ENCODE measurements at regions of chr2 and their contacts with region 1.

Region 1: DNA sequence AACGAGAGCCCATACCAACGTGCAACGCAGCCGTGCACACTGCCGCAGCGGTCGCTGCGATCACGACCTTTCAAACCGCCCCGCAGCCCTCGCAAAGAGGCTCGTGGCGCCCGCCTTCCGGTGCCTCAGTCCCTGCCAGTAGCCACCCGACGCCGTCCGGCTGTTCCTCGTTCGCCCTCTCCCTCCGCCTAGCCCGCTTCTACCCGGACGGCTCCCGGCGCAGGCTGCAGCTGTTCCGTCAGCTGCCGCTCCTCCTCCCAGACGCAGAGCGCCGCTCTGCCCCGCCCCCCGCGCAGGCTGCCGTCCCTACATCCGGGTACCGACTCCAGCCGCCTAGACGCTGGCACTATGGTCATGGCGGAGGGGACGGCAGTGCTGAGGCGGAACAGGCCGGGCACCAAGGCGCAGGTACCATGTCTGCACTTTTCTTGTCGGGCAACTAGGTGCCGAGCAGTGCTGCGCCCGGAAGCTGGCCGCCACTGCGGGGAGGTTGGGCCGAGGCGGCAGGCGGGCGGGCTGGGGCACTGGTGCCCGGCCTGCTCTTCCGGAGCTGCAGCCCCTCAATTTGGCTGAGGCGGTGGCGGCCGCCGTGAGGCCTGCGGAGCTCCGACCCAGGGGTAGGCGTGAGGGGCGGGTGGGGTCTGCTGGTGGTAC is at the start of gene MOB4:
- DNase-seq: peak; percentile 93
- ATAC-seq: peak; percentile 96
- H3K4me3 ChIP-seq: peak within 1 kb of the TSS; percentile 89 to 98 (median 91)
- H3K27ac ChIP-seq: peak within 1 kb of the TSS; percentile 77
- H3K4me1 ChIP-seq: peaks cover 45% of the 10 kb centered on the region
- H3K27me3 ChIP-seq: no peaks in the 10 kb centered on the region; a peak in 1 of 5 replicates
- CTCF ChIP-seq: peak; percentile 53
- EP300 ChIP-seq: peak; percentile 88 to 100
- POLR2A ChIP-seq: peak; percentile 96 to 97
- RAD21 ChIP-seq: peak; percentile 81
- total RNA-seq, gene MOB4: 38.6 and 68.3 TPM in 2 replicates

Region 2: DNA sequence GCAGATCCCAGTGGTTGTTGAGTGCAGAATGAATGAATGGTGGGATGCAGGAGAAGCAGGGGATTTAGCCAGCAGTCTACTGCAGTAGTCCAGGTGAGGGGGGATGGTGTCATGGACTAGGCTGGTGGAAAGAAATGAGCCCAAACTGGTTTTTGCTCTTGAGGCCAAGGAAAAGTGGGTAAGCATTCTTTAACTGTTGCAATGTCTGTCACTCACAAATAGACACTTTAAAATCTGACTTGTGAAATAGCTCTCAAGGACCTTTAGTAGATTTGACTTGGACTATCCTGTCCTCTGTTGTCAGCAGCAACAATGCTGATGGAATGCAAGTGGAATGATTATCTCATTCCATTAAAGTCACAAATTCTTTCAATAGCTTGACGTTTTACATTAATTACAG is 1307.0 kb before region 1 on chr2:
- CTCF ChIA-PET with region 1: no interaction called
- POLR2A ChIA-PET with region 1: no interaction called
- in situ Hi-C with region 1: no loop called
- intact Hi-C with region 1: no loop called
- DNase-seq: no peak
- ATAC-seq: no peak
- H3K4me3 ChIP-seq: no peak overlapping the region
- H3K27ac ChIP-seq: no peak overlapping the region
- H3K4me1 ChIP-seq: no peaks in the 10 kb centered on the region
- H3K27me3 ChIP-seq: no peaks in the 10 kb centered on the region
- CTCF ChIP-seq: no peak
- EP300 ChIP-seq: no peak
- POLR2A ChIP-seq: no peak
- RAD21 ChIP-seq: no peak

Region 3: DNA sequence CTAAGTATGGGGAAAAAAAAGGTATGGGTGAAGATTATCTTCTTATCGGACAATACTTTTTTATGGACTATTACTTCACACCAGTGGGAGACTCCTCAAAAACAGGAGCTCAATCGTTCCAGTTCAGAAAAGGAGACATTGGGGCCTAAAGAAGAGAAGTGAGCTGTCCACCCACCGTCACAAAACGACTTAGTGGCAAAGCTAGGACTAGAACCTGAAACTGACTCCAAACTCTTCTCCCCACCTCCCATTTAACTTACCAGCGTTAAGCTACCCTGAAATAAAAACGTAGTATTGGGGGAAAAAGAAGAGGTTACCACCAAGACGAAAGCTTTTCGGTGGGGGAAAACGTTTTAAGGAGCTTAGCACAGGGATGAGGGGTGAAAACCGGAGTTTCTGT is 716.9 kb before region 1 on chr2:
- CTCF ChIA-PET with region 1: no interaction called
- POLR2A ChIA-PET with region 1: no interaction called
- in situ Hi-C with region 1: no loop called
- intact Hi-C with region 1: loop called (anchors 5 kb)
- DNase-seq: peak; percentile 23
- ATAC-seq: peak; percentile 53
- H3K4me3 ChIP-seq: peak overlapping the region; percentile 66 to 99 (median 83)
- H3K27ac ChIP-seq: peak overlapping the region; percentile 73
- H3K4me1 ChIP-seq: peaks cover 37% of the 10 kb centered on the region
- H3K27me3 ChIP-seq: peaks cover 0 to 4% of the 10 kb centered on the region in 2 experiments; a peak in 1 of 5 replicates
- CTCF ChIP-seq: no peak
- EP300 ChIP-seq: no peak
- POLR2A ChIP-seq: no peak
- RAD21 ChIP-seq: no peak

Region 4: GRCh38 chr2:196961889-196962288 is 554.0 kb before region 1 on chr2:
- CTCF ChIA-PET with region 1: no interaction called
- POLR2A ChIA-PET with region 1: no interaction called
- in situ Hi-C with region 1: no loop called
- intact Hi-C with region 1: no loop called
- DNase-seq: no peak
- ATAC-seq: no peak
- H3K4me3 ChIP-seq: no peak overlapping the region
- H3K27ac ChIP-seq: no peak overlapping the region
- H3K4me1 ChIP-seq: peaks cover 10% of the 10 kb centered on the region
- H3K27me3 ChIP-seq: no peaks in the 10 kb centered on the region
- CTCF ChIP-seq: no peak
- EP300 ChIP-seq: no peak
- POLR2A ChIP-seq: no peak
- RAD21 ChIP-seq: no peak

Region 5: DNA sequence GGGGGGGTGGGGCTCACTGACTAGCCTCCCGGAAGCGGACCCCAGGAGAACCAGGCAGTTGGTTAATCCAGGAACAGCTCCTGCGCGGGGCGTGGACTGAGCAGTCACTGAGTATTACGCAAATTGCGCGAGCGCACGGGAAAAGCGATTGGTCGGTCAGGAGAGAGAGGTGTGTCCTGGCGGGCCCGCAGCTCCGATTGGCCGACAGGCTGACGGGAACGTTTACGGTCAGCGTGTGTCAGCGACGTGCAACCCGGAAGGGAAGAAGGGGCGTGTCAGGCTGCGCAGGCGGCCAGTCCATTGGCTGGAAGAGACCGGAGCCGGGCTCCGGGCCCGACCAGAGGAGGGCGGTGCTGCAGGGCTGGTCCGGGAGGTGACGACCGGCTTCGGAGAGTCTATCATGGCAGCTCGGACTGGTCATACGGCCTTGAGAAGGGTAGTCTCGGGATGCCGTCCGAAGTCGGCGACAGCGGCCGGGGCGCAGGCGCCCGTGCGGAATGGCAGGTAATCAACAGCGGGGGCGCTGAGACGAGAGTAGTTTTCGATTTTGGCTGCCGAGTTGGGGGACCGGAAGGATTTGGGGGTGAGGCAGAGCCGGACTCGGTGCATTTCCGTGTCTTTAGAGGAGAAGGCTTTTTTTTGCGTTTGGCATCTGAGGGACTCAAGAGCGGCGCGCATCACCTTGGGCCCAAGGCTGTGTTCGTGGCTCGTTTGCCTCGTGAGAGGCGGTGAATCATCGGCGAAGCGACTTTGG is 62.5 kb before region 1 on chr2 and contains the start of gene COQ10B:
- CTCF ChIA-PET with region 1: no interaction called
- POLR2A ChIA-PET with region 1: interaction called, 64 read pairs
- in situ Hi-C with region 1: no loop called
- intact Hi-C with region 1: loop called (anchors 1 kb)
- DNase-seq: peak; percentile 100
- ATAC-seq: peak; percentile 89
- H3K4me3 ChIP-seq: peak within 1 kb of the TSS; percentile 80 to 96 (median 95)
- H3K27ac ChIP-seq: peak within 1 kb of the TSS; percentile 97
- H3K4me1 ChIP-seq: peaks cover 31% of the 10 kb centered on the region
- H3K27me3 ChIP-seq: no peaks in the 10 kb centered on the region; a peak in 1 of 5 replicates
- CTCF ChIP-seq: peak; percentile 73
- EP300 ChIP-seq: peak; percentile 37 to 56; a peak in 2 of 4 replicates
- POLR2A ChIP-seq: peak; percentile 72 to 97
- RAD21 ChIP-seq: peak; percentile 81
- total RNA-seq, gene COQ10B: 34.9 and 41.8 TPM in 2 replicates

Region 6: DNA sequence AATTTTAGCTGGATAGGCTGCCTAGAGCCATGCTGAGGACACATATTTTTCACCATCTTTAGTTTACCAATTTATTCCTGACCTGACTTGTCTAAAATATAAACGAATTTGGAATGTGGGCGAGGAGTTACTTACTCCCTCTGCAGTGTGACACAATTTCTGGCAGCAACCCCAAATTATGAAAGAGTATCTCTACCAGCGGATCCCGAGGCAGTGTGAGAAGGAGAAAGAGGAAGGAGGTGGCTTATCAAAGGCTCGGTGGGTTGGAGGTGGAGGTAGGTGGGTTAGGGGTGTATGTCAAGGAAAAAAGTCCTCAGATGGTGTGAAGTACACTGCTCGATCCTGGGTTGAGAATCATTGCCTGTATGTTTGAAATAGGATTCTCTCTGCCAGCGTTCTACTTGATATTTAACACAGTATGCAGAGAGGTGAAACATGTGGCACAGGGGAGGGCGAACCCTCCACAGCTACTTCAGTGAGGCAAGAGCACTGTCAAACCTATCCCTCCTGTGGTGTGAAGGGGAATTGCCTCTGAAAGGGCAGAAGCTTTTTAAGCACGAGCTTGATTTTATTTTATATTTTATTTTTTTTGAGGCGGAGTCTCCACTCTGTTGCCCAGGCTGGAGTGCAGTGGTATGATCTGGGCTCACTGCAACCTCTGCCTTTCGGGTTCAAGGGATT is 83.6 kb after region 1 on chr2:
- CTCF ChIA-PET with region 1: no interaction called
- POLR2A ChIA-PET with region 1: no interaction called
- in situ Hi-C with region 1: no loop called
- intact Hi-C with region 1: loop called (anchors 5 kb)
- DNase-seq: peak; percentile 69
- ATAC-seq: peak; percentile 97
- H3K4me3 ChIP-seq: peak overlapping the region in 1 of 3 experiments; percentile 14; a peak in 1 of 6 replicates
- H3K27ac ChIP-seq: no peak overlapping the region
- H3K4me1 ChIP-seq: peaks cover 23% of the 10 kb centered on the region
- H3K27me3 ChIP-seq: peaks cover 0 to 17% of the 10 kb centered on the region in 2 experiments; a peak in 2 of 5 replicates
- CTCF ChIP-seq: peak; percentile 52
- EP300 ChIP-seq: no peak
- POLR2A ChIP-seq: no peak
- RAD21 ChIP-seq: no peak

Region 7: DNA sequence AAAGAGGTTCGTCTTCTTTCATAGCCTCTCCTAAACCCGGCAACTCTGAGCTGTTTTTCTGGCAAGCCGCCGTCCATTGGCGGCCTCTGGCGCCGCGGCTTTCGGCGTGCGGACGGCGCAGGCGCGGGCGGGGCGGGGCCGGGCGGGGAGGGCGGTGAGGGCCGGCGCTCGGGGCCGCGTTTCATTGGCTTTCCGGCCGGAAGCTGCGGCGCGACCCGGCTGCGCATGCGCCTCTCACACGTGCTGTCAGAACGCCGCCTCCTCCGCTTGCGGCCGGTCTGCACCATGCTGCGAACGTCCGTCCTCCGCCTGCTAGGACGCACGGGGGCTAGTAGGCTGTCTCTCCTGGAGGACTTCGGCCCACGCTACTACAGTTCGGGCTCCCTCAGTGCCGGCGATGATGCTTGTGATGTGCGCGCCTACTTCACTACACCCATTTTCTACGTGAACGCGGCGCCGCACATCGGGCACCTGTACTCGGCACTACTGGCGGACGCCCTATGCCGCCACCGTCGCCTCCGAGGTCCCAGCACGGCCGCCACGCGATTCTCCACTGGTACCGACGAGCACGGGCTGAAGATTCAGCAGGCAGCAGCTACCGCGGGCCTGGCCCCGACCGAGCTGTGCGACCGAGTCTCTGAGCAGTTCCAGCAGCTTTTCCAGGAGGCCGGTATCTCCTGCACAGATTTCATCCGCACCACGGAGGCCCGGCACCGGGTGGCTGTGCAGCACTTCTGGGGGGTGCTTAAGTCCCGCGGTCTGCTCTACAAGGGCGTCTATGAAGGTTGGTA is 189.4 kb after region 1 on chr2 and contains the start of gene MARS2:
- CTCF ChIA-PET with region 1: no interaction called
- POLR2A ChIA-PET with region 1: interaction called, 13 read pairs
- in situ Hi-C with region 1: loop called (anchors 10 kb)
- intact Hi-C with region 1: loop called (anchors 1 kb)
- DNase-seq: peak; percentile 88
- ATAC-seq: peak; percentile 88
- H3K4me3 ChIP-seq: peak within 1 kb of the TSS; percentile 60 to 86 (median 85)
- H3K27ac ChIP-seq: peak within 1 kb of the TSS; percentile 54
- H3K4me1 ChIP-seq: peaks cover 30% of the 10 kb centered on the region
- H3K27me3 ChIP-seq: no peaks in the 10 kb centered on the region; a peak in 1 of 5 replicates
- CTCF ChIP-seq: peak; percentile 42
- EP300 ChIP-seq: no peak; a peak in 1 of 4 replicates
- POLR2A ChIP-seq: peak; percentile 93 to 97
- RAD21 ChIP-seq: peak; percentile 17; the same call in 1 of the 2 replicates
- total RNA-seq, gene MARS2: 16.2 and 19.5 TPM in 2 replicates

Region 8: GRCh38 chr2:199378948-199379650 is 1863.2 kb after region 1 on chr2:
- CTCF ChIA-PET with region 1: no interaction called
- POLR2A ChIA-PET with region 1: no interaction called
- in situ Hi-C with region 1: no loop called
- intact Hi-C with region 1: no loop called
- DNase-seq: no peak
- ATAC-seq: no peak
- H3K4me3 ChIP-seq: no peak overlapping the region
- H3K27ac ChIP-seq: no peak overlapping the region
- H3K4me1 ChIP-seq: no peaks in the 10 kb centered on the region
- H3K27me3 ChIP-seq: no peaks in the 10 kb centered on the region
- CTCF ChIP-seq: no peak
- EP300 ChIP-seq: no peak
- POLR2A ChIP-seq: no peak
- RAD21 ChIP-seq: no peak

Measured in HepG2 (cell line).